HAP-1 (cell line): ENCODE measurements at regions of chr22 and their contacts with region 1.

Region 1: GRCh38 chr22:50326959-50327710 is at the start of gene DENND6B:
- DNase-seq: peak; percentile 65 to 83
- H3K4me3 ChIP-seq: peak within 1 kb of the TSS; percentile 59
- H3K4me1 ChIP-seq: peaks cover 10% of the 10 kb centered on the region
- H3K27me3 ChIP-seq: no peaks in the 10 kb centered on the region

Region 2: GRCh38 chr22:49515475-49515874 is 811.7 kb before region 1 on chr22:
- in situ Hi-C with region 1: no loop called
- DNase-seq: no peak
- H3K4me3 ChIP-seq: no peak overlapping the region
- H3K4me1 ChIP-seq: peaks cover 20% of the 10 kb centered on the region
- H3K27me3 ChIP-seq: no peaks in the 10 kb centered on the region

Region 3: DNA sequence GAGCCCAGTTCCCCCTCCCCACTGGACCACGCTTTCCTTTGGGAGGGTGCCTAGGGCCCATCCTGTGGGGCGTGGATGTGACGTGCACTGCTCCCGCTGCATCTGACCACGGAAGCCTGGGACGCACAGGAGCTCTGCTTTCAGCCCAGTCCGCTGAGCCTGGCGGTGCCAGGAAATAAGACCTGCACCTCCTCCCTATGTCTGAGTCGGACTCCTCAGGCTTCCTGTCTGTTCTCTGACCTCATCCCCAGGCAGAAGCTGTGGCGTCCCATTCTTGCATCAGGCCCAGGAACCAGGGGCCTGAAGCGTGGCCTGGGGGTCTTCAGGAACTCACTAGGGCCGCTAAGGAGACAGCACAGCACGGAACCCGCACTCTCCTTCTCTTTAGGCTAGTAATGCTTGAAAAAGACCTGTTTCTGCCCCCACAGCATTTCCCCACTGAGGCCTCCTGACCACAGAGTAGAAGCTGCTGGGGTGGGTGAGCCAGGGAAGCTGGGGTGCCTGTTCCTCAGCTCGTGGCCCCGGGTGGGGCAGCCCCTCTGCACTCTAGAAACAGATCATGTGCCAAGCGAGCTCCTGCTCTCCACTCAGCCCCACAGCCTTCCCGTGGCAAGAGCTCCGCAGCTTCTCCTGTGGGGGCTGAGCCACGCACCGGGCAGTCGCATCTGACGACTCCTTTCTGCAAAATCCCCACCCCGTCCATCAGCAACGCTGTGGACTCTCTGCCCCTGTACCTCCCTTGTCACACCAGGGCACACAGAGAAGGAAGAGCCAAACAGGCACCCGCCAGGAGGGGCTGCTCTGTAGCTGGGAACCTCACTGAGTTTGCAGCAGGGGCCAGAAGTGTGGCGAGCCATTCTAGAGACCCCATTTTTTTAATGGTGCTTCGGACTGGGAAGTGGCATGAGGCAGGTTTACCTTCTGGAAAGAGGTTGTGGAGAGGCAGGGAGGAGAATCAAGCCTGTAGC is 214.7 kb before region 1 on chr22:
- in situ Hi-C with region 1: no loop called
- DNase-seq: no peak
- H3K4me3 ChIP-seq: no peak overlapping the region
- H3K4me1 ChIP-seq: peaks cover 5% of the 10 kb centered on the region
- H3K27me3 ChIP-seq: no peaks in the 10 kb centered on the region

Region 4: GRCh38 chr22:50250555-50251476 is 76.3 kb before region 1 on chr22 and contains the start of gene HDAC10:
- in situ Hi-C with region 1: loop called (anchors 5 kb)
- DNase-seq: peak; percentile 80 to 91
- H3K4me3 ChIP-seq: peak within 1 kb of the TSS; percentile 71
- H3K4me1 ChIP-seq: peaks cover 5% of the 10 kb centered on the region
- H3K27me3 ChIP-seq: no peaks in the 10 kb centered on the region

Region 5: GRCh38 chr22:50276143-50276542 is 51.0 kb before region 1 on chr22:
- in situ Hi-C with region 1: loop called (anchors 10 kb)
- DNase-seq: peak in 1 of 2 experiments; percentile 50
- H3K4me3 ChIP-seq: no peak overlapping the region
- H3K4me1 ChIP-seq: peaks cover 4% of the 10 kb centered on the region
- H3K27me3 ChIP-seq: no peaks in the 10 kb centered on the region